ENCODE measurements at regions of chr17 and their contacts with region 1.

Region 1: GRCh38 chr17:63549946-63550807 is at the start of gene DCAF7:
- H3K4me3 ChIP-seq: peak within 1 kb of the TSS; percentile 97
- H3K27ac ChIP-seq: peak within 1 kb of the TSS; percentile 96
- H3K4me1 ChIP-seq: peaks cover 12% of the 10 kb centered on the region
- CTCF ChIP-seq: peak; percentile 35; the same call in 1 of the 2 replicates

Region 2: DNA sequence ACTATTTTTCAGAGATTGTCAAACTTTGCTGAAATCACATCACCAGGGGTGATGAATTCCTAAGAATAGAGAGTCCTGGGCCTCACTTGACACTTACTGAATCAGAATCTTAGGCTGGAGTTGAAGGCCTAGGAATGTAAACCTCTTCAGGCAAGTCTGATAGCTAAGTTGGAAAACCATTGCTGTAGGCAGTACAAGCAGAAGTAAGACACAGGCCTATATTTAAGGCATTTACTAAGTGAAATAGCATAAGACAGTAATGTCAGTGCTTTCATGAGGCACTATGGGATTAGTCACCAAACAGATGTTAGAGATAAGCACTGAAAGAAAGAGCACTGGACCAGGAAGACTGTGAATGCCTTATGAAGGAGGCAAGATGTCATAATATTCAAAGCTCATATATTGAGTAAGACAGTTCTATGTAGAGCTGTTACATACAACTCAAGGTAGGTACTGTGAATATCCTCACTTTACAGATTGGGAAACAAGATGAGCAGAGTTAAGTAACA is 21.6 kb after region 1 on chr17:
- CTCF ChIA-PET with region 1: interaction called, 6 read pairs
- POLR2A ChIA-PET with region 1: interaction called, 12 read pairs
- H3K4me3 ChIP-seq: no peak overlapping the region
- H3K27ac ChIP-seq: no peak overlapping the region
- H3K4me1 ChIP-seq: no peaks in the 10 kb centered on the region; the same call in 1 of the 2 replicates
- CTCF ChIP-seq: no peak

Region 3: DNA sequence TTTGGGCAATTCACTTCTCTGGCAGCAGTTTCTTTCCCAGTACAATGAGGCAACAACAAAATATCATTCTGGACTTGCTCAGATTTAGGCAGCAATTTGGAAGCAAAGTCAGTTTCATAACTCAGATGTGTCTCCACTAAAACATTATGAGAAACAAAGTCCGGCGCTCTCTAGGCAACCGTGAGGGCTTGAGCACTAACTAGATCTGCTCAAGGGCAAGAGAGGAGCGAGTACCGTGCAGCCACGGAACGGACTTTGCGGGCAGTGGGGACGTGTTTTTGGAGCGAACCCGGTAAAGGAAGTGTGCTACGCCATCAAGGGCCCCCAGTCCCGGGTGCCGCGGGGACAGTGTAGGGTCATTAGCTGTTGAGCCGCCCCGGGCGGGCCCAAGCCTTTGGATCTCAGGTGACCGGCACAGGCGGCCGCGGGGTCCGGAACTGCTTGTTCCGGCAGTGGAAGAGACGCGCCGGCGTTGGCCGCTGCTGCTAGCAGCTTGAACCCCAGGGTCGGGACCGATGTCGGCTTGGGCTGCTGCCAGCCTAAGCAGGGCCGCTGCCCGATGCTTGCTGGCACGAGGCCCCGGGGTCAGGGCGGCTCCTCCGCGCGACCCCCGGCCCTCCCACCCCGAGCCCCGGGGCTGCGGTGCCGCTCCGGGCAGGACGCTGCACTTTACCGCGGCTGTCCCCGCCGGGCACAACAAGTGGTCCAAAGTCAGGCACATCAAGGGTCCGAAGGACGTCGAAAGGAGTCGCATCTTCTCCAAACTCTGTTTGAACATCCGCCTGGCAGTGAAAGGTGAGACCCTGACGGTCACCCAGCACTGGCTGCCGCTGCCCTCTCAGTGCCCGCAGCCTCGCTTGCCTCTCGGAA is 50.6 kb after region 1 on chr17 and contains the start of gene TACO1:
- CTCF ChIA-PET with region 1: no interaction called
- POLR2A ChIA-PET with region 1: interaction called, 15 read pairs
- H3K4me3 ChIP-seq: peak within 1 kb of the TSS; percentile 92
- H3K27ac ChIP-seq: peak within 1 kb of the TSS; percentile 75
- H3K4me1 ChIP-seq: no peaks in the 10 kb centered on the region
- CTCF ChIP-seq: no peak; the same call in 1 of the 2 replicates

Region 4: DNA sequence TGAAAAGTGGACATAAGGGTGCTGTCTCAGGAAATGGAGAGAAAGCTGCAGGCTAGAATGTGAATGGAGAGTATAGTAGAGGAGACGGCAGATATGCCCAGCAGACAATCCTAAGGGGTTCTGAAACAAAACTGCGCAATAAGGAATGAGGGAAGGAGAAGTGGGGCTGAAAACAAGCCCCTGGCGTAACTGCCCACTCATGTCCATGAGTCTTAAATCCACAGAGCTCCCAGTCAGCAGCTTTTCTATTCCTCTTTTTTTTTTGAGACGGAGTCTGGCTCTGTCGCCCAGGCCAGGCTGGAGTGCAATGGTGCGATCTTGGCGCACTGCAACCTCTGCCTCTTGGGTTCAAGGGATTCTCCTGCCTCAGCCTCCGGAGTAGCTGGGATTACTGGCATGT is 185.5 kb after region 1 on chr17:
- CTCF ChIA-PET with region 1: no interaction called
- POLR2A ChIA-PET with region 1: interaction called, 10 read pairs
- H3K4me3 ChIP-seq: no peak overlapping the region
- H3K27ac ChIP-seq: no peak overlapping the region
- H3K4me1 ChIP-seq: peaks cover 5% of the 10 kb centered on the region; the same call in 1 of the 2 replicates
- CTCF ChIP-seq: no peak